Transverse colon (tissue), 4 donors: ENCODE measurements at regions of chr17 and their contacts with region 1.

Region 1: GRCh38 chr17:43033948-43034881 is 9.2 kb downstream of the RND2 start:
- DNase-seq: no peak
- H3K4me3 ChIP-seq: no peak overlapping the region
- H3K27ac ChIP-seq: no peak overlapping the region
- H3K4me1 ChIP-seq: no peaks in the 10 kb centered on the region
- H3K27me3 ChIP-seq: no peaks in the 10 kb centered on the region
- CTCF ChIP-seq: no peak
- EP300 ChIP-seq: no peak
- POLR2A ChIP-seq: no peak

Region 2: GRCh38 chr17:42928714-42929496 is 105.3 kb before region 1 on chr17:
- in situ Hi-C with region 1: no loop called
- intact Hi-C with region 1: no loop called
- DNase-seq: peak; percentile 18
- H3K4me3 ChIP-seq: no peak overlapping the region
- H3K27ac ChIP-seq: peak overlapping the region; percentile 49 to 74 (median 68)
- H3K4me1 ChIP-seq: peaks cover 0 to 7% (median 5%) of the 10 kb centered on the region in 4 donors
- H3K27me3 ChIP-seq: peaks cover 42% of the 10 kb centered on the region
- CTCF ChIP-seq: peak; percentile 58 to 83 (median 65)
- EP300 ChIP-seq: no peak
- POLR2A ChIP-seq: no peak

Region 3: GRCh38 chr17:43125133-43125966 is 91.1 kb after region 1 on chr17 and contains the start of gene BRCA1:
- in situ Hi-C with region 1: loop called in 1 of 4 experiments (anchors 5 kb)
- intact Hi-C with region 1: no loop called
- DNase-seq: peak; percentile 95
- H3K4me3 ChIP-seq: peak within 1 kb of the TSS; percentile 49 to 80 (median 64)
- H3K27ac ChIP-seq: peak within 1 kb of the TSS; percentile 77 to 89 (median 88)
- H3K4me1 ChIP-seq: peaks cover 12 to 31% (median 19%) of the 10 kb centered on the region in 4 donors
- H3K27me3 ChIP-seq: no peaks in the 10 kb centered on the region
- CTCF ChIP-seq: no peak
- EP300 ChIP-seq: no peak
- POLR2A ChIP-seq: peak; percentile 91
- total RNA-seq, gene BRCA1: 2.6 to 121 (median 5.8) TPM